ENCODE measurements at regions of chr2 and their contacts with region 1.

Region 1: DNA sequence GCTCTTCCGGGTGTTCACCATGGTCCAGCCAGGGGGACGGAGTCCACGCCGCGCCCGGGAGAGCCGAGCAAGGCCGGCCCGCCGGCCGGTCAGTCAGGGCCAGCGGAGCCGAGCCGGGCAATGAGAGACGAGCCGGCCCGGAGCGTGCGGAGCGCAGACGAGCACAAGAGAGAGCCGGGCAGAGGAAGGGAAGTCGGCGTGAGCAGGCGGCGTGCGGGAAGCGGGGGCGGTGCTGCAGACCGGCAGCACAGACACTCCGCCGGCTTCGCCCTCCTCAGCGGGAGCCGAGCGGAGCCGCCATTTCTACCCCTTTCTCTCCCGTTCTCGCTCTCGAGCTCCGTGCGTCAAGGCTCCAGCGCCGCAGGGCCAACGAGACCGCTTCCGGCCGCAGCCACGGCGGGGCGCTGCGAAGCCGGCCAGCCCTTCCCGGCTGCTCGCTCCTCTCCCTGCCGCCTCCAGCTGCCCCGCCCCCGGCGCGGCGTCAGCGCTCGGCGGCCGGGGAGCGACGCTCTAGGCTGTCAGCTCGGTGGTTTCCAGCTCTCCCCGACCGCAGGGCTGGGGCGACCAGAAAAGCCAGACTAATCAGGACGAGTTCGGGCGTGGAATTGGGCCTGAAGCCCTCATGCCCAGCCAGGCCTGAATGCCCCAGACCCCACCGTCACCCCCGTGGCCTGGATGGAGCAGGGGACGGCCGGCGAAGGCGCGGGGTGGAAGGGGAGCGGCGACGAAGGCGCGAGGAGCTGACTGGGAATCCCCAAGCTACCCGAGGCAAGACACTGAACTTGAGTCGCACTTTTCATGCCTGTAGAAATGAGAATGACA is at the start of gene ATAD2B:
- DNase-seq: peak; percentile 90
- ATAC-seq: peak; percentile 90
- H3K4me3 ChIP-seq: peak within 1 kb of the TSS; percentile 90 to 98 (median 95)
- H3K27ac ChIP-seq: peak within 1 kb of the TSS; percentile 94
- H3K4me1 ChIP-seq: peaks cover 46% of the 10 kb centered on the region
- H3K27me3 ChIP-seq: no peaks in the 10 kb centered on the region; a peak in 1 of 5 replicates
- CTCF ChIP-seq: peak; percentile 95
- EP300 ChIP-seq: 0 out of 4 replicates have a peak, but pooled peaks of 1 of the 2 experiments have one; percentile 23
- POLR2A ChIP-seq: peak; percentile 96 to 97
- RAD21 ChIP-seq: peak; percentile 99
- total RNA-seq, gene ATAD2B: 22.2 and 22.4 TPM in 2 replicates

Region 2: DNA sequence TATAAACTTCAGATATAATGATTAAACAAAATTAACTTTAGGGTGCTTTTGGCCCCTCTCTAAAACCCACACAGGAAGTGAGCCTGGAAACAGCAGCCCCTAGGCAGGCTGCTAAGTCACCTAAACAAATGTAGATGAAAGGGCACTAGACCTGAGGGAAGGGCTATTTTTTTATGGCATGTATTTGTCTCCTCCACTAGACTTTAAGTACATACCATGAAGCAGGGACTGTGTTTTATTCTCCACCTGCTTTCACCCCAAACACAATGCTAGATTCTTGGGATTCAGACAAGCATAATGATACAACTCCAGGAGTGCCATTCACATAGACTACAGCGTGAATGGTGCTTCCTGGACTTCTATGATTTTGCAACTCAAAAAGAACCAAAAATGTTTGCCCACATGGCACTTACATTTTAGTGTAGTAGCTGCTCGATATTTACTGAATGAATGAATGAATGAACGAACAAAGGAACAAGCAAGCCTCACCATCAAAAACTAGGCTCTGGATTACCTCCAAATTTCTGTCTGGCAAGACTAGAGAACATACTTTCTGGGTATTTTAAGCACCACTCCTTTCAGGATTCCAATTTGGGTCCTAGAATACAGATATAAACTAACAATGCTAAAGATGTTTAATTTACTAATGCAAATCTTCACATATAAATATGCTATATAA is 10.1 kb before region 1 on chr2:
- CTCF ChIA-PET with region 1: no interaction called
- POLR2A ChIA-PET with region 1: interaction called, 37 read pairs
- in situ Hi-C with region 1: no loop called
- intact Hi-C with region 1: no loop called
- DNase-seq: peak; percentile 73
- ATAC-seq: peak; percentile 75
- H3K4me3 ChIP-seq: no peak overlapping the region
- H3K27ac ChIP-seq: peak overlapping the region; percentile 50
- H3K4me1 ChIP-seq: peaks cover 48% of the 10 kb centered on the region
- H3K27me3 ChIP-seq: no peaks in the 10 kb centered on the region
- CTCF ChIP-seq: no peak
- EP300 ChIP-seq: no peak
- POLR2A ChIP-seq: no peak
- RAD21 ChIP-seq: no peak

Region 3: GRCh38 chr2:23976883-23977282 is 49.9 kb after region 1 on chr2:
- CTCF ChIA-PET with region 1: no interaction called
- POLR2A ChIA-PET with region 1: no interaction called
- in situ Hi-C with region 1: no loop called
- intact Hi-C with region 1: no loop called
- DNase-seq: no peak
- ATAC-seq: no peak
- H3K4me3 ChIP-seq: no peak overlapping the region
- H3K27ac ChIP-seq: no peak overlapping the region
- H3K4me1 ChIP-seq: no peaks in the 10 kb centered on the region
- H3K27me3 ChIP-seq: no peaks in the 10 kb centered on the region
- CTCF ChIP-seq: no peak
- EP300 ChIP-seq: no peak
- POLR2A ChIP-seq: no peak
- RAD21 ChIP-seq: no peak

Region 4: DNA sequence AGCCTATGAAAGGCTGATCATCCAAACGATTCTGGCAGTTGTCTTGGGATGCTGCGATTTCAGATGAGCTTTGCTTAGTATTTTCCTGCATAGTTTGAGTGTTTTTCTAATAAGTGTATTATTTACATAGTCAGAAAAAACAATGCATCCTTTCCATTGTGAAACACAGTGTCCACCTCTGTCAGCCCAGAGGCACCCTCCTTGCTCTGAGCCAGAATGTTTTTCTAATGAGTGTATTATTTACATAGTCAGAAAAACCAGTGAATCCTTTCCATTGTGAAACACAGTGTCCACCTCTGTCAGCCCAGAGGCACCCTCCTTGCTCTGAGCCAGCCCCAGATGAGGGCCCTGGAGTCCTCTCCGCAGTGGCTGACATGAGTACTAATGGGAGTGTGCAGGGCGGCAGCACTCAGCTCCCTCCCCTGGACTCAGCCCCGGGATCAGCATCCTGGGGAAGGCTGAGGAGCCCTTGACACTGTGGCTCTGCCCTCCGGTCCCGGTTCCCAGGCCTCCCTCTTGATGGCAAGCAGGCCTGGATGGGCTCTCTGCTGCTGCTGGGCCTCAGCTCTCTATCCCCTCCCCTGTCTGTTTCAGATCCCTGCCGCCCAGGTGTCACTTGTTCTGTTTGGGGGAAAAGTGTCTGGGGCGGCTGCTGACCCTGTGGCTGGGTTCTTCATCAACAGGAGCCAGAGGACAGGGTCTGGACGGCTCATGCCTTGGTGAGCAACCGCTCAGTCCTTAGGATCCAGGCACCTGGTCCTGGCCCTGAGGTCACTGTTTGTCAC is 88.8 kb after region 1 on chr2:
- CTCF ChIA-PET with region 1: no interaction called
- POLR2A ChIA-PET with region 1: interaction called, 62 read pairs
- in situ Hi-C with region 1: no loop called
- intact Hi-C with region 1: loop called (anchors 2 kb)
- DNase-seq: peak; percentile 98
- ATAC-seq: peak; percentile 95
- H3K4me3 ChIP-seq: peak overlapping the region; percentile 22 to 70 (median 27); a peak in 5 of 6 replicates
- H3K27ac ChIP-seq: peak overlapping the region; percentile 74
- H3K4me1 ChIP-seq: peaks cover 41% of the 10 kb centered on the region
- H3K27me3 ChIP-seq: no peaks in the 10 kb centered on the region
- CTCF ChIP-seq: peak; percentile 46
- EP300 ChIP-seq: peak; percentile 25 to 81; a peak in 3 of 4 replicates
- POLR2A ChIP-seq: peak; percentile 36 to 78; a peak in 2 of 4 replicates
- RAD21 ChIP-seq: peak; percentile 38

Region 5: DNA sequence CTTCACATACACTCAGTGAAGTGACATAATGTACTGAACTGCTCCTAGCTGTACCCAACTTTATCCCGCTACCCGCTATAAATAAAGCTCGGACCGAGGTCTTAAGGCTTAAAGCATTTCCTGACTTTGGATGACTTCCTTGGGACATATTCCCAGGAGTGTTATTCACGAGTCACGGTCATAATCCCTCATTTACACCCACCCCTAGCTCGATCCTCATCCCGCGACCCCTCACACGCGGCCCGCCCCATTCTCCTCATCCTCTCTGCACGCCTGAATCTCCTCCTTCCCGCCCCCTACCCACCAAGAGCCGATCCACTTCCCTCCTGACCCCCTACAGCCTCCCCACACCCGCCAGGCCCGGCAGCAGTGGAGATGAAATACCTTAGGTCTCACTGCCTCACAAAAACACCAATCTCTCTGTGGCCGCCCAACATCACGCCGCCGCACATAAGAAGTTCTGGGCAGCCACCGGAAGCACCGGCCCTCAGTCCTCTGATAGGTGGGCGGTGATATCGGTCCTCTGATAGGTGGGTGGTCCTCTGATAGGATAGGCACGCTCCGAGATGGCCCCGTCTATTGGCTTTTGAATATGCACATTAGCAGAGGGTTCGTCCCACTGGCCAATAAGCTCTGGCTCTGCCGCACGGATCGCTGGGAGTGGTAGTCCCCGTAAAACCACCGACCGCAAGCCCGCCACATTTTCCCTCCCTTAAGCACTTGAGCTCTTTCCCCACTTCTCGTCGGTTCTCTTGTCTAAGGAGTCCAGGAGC is 120.2 kb after region 1 on chr2 and contains the start of gene WDCP:
- CTCF ChIA-PET with region 1: no interaction called
- POLR2A ChIA-PET with region 1: interaction called, 76 read pairs
- in situ Hi-C with region 1: no loop called
- intact Hi-C with region 1: no loop called
- DNase-seq: peak; percentile 99
- ATAC-seq: peak; percentile 93
- H3K4me3 ChIP-seq: peak within 1 kb of the TSS; percentile 84 to 93 (median 88)
- H3K27ac ChIP-seq: peak within 1 kb of the TSS; percentile 90
- H3K4me1 ChIP-seq: peaks cover 59% of the 10 kb centered on the region
- H3K27me3 ChIP-seq: no peaks in the 10 kb centered on the region; a peak in 2 of 5 replicates
- CTCF ChIP-seq: 0 out of 2 replicates have a peak, but pooled peaks have one; percentile 10
- EP300 ChIP-seq: no peak
- POLR2A ChIP-seq: peak; percentile 93 to 97
- RAD21 ChIP-seq: no peak
- total RNA-seq, gene WDCP: 22.6 and 39.4 TPM in 2 replicates

Region 6: DNA sequence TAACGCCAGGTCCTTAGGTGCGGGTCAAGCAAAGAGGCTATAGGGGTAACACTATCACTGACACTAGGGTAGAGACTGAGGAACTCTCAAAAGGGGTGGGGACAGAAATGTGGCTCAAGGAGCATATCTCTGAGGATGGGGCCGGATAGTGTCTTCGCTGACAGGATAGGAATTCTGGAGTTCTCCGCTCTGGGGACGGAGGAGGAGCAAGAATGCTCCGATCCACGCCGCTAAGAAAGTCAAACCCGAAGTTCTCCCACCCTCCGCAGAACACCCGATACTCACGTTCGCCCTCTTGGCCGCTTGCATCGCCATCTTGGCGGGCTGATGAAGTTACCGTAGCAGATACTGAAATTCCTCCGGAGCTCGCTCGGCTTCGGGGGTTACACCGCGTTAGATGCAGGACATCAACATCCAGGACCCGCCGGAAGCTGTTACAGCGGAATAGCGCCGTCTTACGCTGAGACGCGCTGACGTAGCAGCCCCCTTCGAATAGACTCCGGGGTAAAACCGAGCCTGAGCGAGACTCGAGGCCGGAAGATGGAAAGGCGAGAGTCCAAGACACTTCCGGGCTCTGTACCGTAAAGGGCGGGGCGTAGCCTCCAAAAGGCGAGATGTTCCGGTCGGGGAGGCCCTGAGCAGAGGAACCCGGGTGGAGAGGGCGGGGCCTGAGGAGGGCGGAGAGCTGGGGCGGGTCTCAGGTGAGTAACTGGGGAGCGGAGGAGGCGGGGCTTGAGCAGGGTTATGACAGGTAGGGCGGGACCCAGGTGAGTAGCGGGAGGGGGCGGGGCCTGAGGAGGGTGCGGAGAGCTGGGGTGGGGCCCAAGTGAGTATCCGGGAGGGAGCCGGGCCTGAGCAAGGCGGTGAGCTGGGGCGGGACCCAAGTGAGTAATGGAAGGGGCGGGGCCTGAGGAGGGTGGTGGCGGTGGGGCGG is 149.2 kb after region 1 on chr2 and contains the start of gene SF3B6:
- CTCF ChIA-PET with region 1: no interaction called
- POLR2A ChIA-PET with region 1: interaction called, 38 read pairs
- in situ Hi-C with region 1: no loop called
- intact Hi-C with region 1: no loop called
- DNase-seq: peak; percentile 99
- ATAC-seq: peak; percentile 95
- H3K4me3 ChIP-seq: peak within 1 kb of the TSS; percentile 76 to 100 (median 94)
- H3K27ac ChIP-seq: peak within 1 kb of the TSS; percentile 59
- H3K4me1 ChIP-seq: peaks cover 15% of the 10 kb centered on the region
- H3K27me3 ChIP-seq: no peaks in the 10 kb centered on the region; a peak in 1 of 5 replicates
- CTCF ChIP-seq: peak; percentile 52
- EP300 ChIP-seq: peak; percentile 17 to 78; a peak in 2 of 4 replicates
- POLR2A ChIP-seq: peak; percentile 80 to 91
- RAD21 ChIP-seq: peak; percentile 55
- total RNA-seq, gene SF3B6: 182 and 254 TPM in 2 replicates

Region 7: DNA sequence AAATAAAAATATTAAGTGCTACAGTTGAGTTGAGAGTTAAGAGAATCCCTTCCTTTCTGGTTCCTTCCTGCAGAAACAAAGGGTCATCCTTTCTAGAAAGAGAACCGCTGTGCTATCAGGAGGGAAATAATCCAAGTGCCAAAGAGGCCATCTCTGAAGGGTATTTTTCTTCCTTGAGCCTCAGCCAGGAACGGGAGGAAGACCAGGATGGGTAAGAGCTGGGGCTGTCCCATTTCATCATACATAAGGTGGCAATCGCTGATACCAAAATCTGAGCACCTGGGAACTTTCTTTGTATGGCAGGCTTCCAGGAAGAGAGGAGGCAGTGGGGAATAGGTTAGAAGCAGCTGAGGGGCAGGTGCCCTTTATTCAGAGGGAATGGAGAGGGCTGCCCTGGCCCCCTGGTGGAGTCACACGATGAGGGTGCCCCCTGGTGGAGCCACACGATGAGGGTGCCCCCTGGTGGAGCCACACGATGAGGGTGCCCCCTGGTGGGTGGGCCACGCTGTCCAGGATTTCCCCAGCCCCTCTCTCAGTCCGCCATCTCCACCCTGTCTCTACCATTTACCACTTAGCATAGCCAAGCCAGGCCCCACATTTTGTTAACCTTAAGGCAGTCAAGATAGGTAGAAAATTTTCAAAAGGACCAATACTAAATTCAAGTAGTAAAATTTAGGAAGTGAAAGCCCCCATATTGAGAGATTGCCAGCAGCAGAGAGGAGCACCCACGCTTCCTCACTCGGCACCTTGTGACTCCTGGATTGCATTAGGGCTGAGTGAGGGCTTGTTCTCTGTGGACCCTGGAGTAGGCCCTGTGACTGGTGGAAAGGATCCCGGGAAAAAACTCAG is 237.4 kb after region 1 on chr2:
- CTCF ChIA-PET with region 1: interaction called, 20 read pairs
- POLR2A ChIA-PET with region 1: interaction called, 3 read pairs
- in situ Hi-C with region 1: no loop called
- intact Hi-C with region 1: loop called (anchors 2 kb)
- DNase-seq: peak; percentile 41
- ATAC-seq: peak; percentile 98
- H3K4me3 ChIP-seq: no peak overlapping the region
- H3K27ac ChIP-seq: no peak overlapping the region
- H3K4me1 ChIP-seq: no peaks in the 10 kb centered on the region
- H3K27me3 ChIP-seq: peaks cover 2 to 21% of the 10 kb centered on the region in 2 experiments; a peak in 3 of 5 replicates
- CTCF ChIP-seq: peak; percentile 92; the same call in 1 of the 2 replicates
- EP300 ChIP-seq: no peak
- POLR2A ChIP-seq: no peak
- RAD21 ChIP-seq: peak; percentile 97